ENCODE measurements at regions of chr7 and their contacts with region 1.

Region 1: GRCh38 chr7:105677817-105678585 is 96.7 kb upstream of the EFCAB10 start:
- DNase-seq: peak; percentile 51 to 82 (median 53)
- H3K4me3 ChIP-seq: peak overlapping the region; percentile 18
- H3K4me3 Mint-ChIP-seq: peak overlapping the region; percentile 25 to 89 (median 76)
- H3K27ac ChIP-seq: peak overlapping the region; percentile 49
- H3K27ac Mint-ChIP-seq: peak overlapping the region; percentile 93 to 99 (median 96)
- H3K4me1 ChIP-seq: peaks cover 59% of the 10 kb centered on the region
- H3K4me1 Mint-ChIP-seq: peaks cover 62 to 86% (median 84%) of the 10 kb centered on the region in 3 donors
- H3K27me3 ChIP-seq: no peaks in the 10 kb centered on the region
- H3K27me3 Mint-ChIP-seq: no peaks in the 10 kb centered on the region

Region 2: DNA sequence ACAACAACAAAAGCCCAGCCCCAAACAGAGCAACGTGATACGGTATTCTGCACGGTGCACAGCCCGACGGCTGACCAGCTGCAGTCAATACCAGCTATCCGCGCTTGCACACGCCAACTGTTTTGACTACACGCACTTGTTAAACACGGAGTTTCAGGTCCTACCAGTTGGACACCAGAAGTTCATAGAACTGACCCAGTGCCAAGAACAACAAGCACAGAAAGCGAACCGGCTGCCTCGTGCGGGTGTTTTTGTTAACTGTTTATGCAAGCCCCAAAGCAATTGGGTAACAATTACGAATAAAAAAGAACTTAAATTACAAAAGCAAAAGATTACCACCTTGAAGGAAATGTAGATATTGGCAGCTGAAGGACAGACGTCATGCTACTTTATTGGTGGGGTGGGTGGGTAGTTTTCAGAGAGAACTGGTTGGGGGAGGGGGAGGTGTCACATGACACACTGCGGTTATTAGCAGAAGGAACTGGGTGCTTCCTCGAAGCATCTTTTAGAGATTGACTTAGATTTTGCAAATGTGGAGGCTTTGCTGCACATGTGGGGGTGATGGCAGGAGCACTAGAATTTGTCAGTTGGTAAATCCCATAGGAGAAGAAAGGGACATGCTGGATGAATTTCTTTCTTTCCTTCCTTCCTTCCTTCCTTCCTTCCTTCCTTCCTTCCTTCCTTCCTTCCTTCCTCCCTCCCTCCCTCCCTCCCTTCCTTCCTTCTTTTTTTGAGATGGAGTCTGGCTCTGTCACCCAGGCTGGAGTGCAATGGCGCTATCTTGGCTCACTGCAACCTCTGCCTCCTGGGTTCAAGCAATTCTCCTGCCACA is 13.9 kb after region 1 on chr7:
- CTCF ChIA-PET with region 1: interaction called, 10 read pairs
- POLR2A ChIA-PET with region 1: interaction called, 14 read pairs
- DNase-seq: peak; percentile 63 to 85 (median 80)
- H3K4me3 ChIP-seq: peak overlapping the region; percentile 87
- H3K4me3 Mint-ChIP-seq: peak overlapping the region; percentile 90 to 97 (median 95)
- H3K27ac ChIP-seq: peak overlapping the region; percentile 89
- H3K27ac Mint-ChIP-seq: peak overlapping the region; percentile 94 to 99 (median 97)
- H3K4me1 ChIP-seq: peaks cover 26% of the 10 kb centered on the region
- H3K4me1 Mint-ChIP-seq: peaks cover 51 to 71% (median 69%) of the 10 kb centered on the region in 3 donors
- H3K27me3 ChIP-seq: no peaks in the 10 kb centered on the region
- H3K27me3 Mint-ChIP-seq: peaks cover 0 to 1% of the 10 kb centered on the region in 2 donors

Region 3: GRCh38 chr7:105795390-105795729 is 117.4 kb after region 1 on chr7:
- CTCF ChIA-PET with region 1: no interaction called
- POLR2A ChIA-PET with region 1: no interaction called
- DNase-seq: no peak
- H3K4me3 ChIP-seq: no peak overlapping the region
- H3K4me3 Mint-ChIP-seq: no peak overlapping the region
- H3K27ac ChIP-seq: no peak overlapping the region
- H3K27ac Mint-ChIP-seq: no peak overlapping the region
- H3K4me1 ChIP-seq: peaks cover 9% of the 10 kb centered on the region
- H3K4me1 Mint-ChIP-seq: peaks cover 19 to 43% (median 39%) of the 10 kb centered on the region in 3 donors
- H3K27me3 ChIP-seq: no peaks in the 10 kb centered on the region
- H3K27me3 Mint-ChIP-seq: no peaks in the 10 kb centered on the region

Region 4: DNA sequence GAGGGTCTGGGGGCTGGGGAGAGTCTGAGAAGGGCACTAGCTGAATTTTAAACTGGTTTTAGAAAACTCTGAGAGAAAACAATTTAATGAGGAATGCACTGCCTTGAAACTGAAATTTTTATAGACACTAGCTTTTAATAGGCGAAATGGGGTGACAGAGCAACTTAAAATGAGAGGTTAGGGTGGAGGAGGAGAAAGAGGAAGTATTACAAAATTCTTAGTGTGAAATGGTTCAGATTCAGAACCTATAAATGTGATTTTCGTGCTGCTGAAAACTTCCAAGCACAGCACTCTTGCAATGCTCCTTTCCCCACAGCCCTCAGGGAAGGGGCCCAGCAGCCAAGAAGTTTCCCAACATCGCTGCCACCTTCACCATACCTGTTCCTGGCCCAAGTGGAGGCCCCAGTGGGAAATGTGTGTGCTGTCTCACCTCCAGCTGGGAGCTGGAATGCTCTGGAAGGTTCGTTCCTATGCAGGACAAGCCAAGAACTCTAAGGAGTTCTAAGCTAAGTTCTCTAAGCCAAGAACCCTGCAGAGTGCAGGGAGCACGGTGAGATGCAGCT is 138.3 kb after region 1 on chr7:
- CTCF ChIA-PET with region 1: no interaction called
- POLR2A ChIA-PET with region 1: no interaction called
- DNase-seq: no peak
- H3K4me3 ChIP-seq: no peak overlapping the region
- H3K4me3 Mint-ChIP-seq: peak overlapping the region in 2 of 7 donors; percentile 13 to 29
- H3K27ac ChIP-seq: no peak overlapping the region
- H3K27ac Mint-ChIP-seq: peak overlapping the region in 1 of 8 donors; percentile 54
- H3K4me1 ChIP-seq: no peaks in the 10 kb centered on the region
- H3K4me1 Mint-ChIP-seq: peaks cover 11 to 38% (median 32%) of the 10 kb centered on the region in 3 donors
- H3K27me3 ChIP-seq: no peaks in the 10 kb centered on the region
- H3K27me3 Mint-ChIP-seq: no peaks in the 10 kb centered on the region

Measured in CD8-positive, alpha-beta memory T cell (primary cell).